ENCODE measurements at regions of chr10 and their contacts with region 1.

Region 1: GRCh38 chr10:22714479-22715289 is at the start of gene PIP4K2A:
- DNase-seq: peak; percentile 82
- ATAC-seq: peak; percentile 91 to 94
- total RNA-seq, gene PIP4K2A: 21.1 to 24.5 TPM

Region 2: GRCh38 chr10:22620140-22620857 is 94.4 kb before region 1 on chr10:
- intact Hi-C with region 1: loop called in 1 of 2 experiments (anchors 5 kb)
- DNase-seq: peak; percentile 90
- ATAC-seq: peak; percentile 83 to 92